ENCODE measurements at regions of chr3 and their contacts with region 1.

Region 1: DNA sequence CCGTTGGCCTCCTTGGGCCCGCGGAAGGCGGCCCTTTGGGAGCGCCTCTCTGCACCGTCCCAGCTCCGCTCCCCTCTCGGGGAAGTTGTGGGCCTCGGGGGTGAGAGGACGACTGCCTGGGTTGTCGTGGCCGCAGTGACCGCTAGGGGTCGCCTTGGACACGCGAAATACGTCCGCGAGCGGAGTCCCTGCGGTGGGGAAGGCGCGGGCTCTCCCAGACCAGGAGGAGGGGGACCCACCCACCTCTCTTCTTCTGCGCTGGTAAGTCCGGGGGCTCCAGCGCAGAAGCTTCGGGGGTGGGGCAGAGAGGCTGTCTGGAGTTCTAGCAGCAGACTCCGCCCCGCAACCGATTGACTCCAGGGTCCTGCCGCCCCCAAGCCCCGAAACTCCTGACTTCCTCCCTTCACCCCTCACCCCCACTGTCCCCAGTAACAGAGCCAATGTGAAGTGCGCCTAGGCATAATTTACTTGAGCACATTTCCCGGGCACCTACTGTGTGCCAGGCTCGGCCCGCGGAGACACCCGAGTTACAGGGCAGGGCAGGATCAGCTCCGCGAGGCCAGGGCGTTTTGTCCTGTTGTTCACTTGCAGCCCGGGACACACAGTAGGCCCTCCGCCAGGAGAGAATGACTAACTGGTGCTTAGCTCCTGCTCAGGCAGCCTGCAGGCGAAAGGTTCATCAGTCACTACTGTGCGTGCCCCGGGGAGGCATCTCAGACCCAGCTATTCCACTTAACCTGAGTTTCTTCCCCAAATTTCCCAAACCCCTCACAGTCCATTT is 32.8 kb downstream of the DNASE1L3 start:
- DNase-seq: peak; percentile 80 to 95 (median 88)
- ATAC-seq: peak; percentile 89
- H3K4me3 ChIP-seq: peak overlapping the region; percentile 60
- H3K4me3 Mint-ChIP-seq: peak overlapping the region; percentile 62
- H3K27ac ChIP-seq: no peak overlapping the region
- H3K27ac Mint-ChIP-seq: no peak overlapping the region
- H3K4me1 ChIP-seq: peaks cover 19% of the 10 kb centered on the region
- H3K4me1 Mint-ChIP-seq: peaks cover 13% of the 10 kb centered on the region
- H3K27me3 ChIP-seq: peaks cover 0 to 5% of the 10 kb centered on the region in 2 experiments
- H3K27me3 Mint-ChIP-seq: no peaks in the 10 kb centered on the region
- CTCF ChIP-seq: peak; percentile 96

Region 2: DNA sequence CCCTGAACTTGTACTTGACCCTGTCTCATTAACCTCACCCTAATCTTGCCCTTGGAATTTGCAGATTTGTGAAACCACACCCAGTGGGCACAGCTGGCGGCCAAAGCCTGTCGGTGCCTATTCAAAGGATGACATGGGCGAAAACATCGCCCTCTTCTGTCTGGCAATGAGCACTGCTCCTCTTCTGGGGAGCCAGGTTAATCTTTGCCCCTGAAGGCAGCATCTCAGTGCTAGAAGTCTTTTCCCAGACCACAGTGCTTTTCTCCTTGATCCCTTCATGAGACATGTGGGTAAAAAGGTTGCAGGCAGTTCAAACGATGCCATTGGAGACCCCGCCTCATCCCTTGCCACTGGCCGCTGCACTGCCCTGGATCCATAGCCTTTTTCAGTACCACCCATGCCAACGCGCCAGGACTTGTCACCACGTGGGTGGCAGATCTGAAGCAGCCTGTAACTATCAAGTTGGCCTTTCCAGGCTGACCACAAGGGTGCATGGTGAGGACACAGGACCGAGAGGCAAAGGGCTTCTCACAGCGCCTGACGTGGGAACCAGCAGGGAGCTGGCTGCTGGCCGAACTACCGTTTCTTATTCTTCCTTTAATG is 39.4 kb after region 1 on chr3:
- CTCF ChIA-PET with region 1: interaction called, 8 read pairs
- POLR2A ChIA-PET with region 1: no interaction called
- intact Hi-C with region 1: loop called in 1 of 2 experiments (anchors 2 kb)
- DNase-seq: peak; percentile 21 to 80 (median 43)
- ATAC-seq: peak; percentile 93
- H3K4me3 ChIP-seq: no peak overlapping the region
- H3K4me3 Mint-ChIP-seq: no peak overlapping the region
- H3K27ac ChIP-seq: no peak overlapping the region
- H3K27ac Mint-ChIP-seq: no peak overlapping the region
- H3K4me1 ChIP-seq: peaks cover 6% of the 10 kb centered on the region
- H3K4me1 Mint-ChIP-seq: peaks cover 6% of the 10 kb centered on the region
- H3K27me3 ChIP-seq: no peaks in the 10 kb centered on the region
- H3K27me3 Mint-ChIP-seq: no peaks in the 10 kb centered on the region
- CTCF ChIP-seq: peak; percentile 76

Region 3: GRCh38 chr3:58299839-58300516 is 122.0 kb after region 1 on chr3:
- CTCF ChIA-PET with region 1: no interaction called
- POLR2A ChIA-PET with region 1: no interaction called
- intact Hi-C with region 1: loop called in 1 of 2 experiments (anchors 5 kb)
- DNase-seq: peak in 2 of 14 experiments; percentile 23 to 36
- ATAC-seq: no peak
- H3K4me3 ChIP-seq: no peak overlapping the region
- H3K4me3 Mint-ChIP-seq: no peak overlapping the region
- H3K27ac ChIP-seq: no peak overlapping the region
- H3K27ac Mint-ChIP-seq: no peak overlapping the region
- H3K4me1 ChIP-seq: no peaks in the 10 kb centered on the region
- H3K4me1 Mint-ChIP-seq: no peaks in the 10 kb centered on the region
- H3K27me3 ChIP-seq: peaks cover 26 to 29% of the 10 kb centered on the region in 2 experiments
- H3K27me3 Mint-ChIP-seq: peaks cover 35% of the 10 kb centered on the region
- CTCF ChIP-seq: no peak

Region 4: DNA sequence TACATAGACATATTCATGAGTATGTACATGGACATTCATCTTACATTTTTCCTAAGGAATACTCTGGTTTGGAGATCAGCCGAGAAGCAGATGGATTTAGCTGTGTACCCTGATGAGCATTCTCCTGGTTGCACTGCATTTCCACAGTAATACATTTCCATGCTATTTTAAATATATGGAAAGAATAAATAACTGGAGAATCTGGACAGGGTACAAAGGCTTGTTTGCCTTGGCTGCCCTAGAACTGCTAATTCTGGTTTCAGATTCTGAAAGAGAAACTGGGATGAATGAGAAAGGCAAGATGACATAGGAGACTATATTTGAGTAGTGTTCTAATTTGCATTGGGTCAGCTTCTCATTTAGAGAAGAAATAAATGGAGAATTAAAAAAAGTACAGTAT is 679.5 kb after region 1 on chr3:
- CTCF ChIA-PET with region 1: no interaction called
- POLR2A ChIA-PET with region 1: no interaction called
- intact Hi-C with region 1: no loop called
- DNase-seq: no peak
- ATAC-seq: no peak
- H3K4me3 ChIP-seq: no peak overlapping the region
- H3K4me3 Mint-ChIP-seq: no peak overlapping the region
- H3K27ac ChIP-seq: no peak overlapping the region
- H3K27ac Mint-ChIP-seq: no peak overlapping the region
- H3K4me1 ChIP-seq: no peaks in the 10 kb centered on the region
- H3K4me1 Mint-ChIP-seq: no peaks in the 10 kb centered on the region
- H3K27me3 ChIP-seq: no peaks in the 10 kb centered on the region
- H3K27me3 Mint-ChIP-seq: peaks cover 4% of the 10 kb centered on the region
- CTCF ChIP-seq: no peak

Region 5: GRCh38 chr3:59185586-59186369 is 1007.8 kb after region 1 on chr3:
- CTCF ChIA-PET with region 1: no interaction called
- POLR2A ChIA-PET with region 1: no interaction called
- intact Hi-C with region 1: no loop called
- DNase-seq: no peak
- ATAC-seq: no peak
- H3K4me3 ChIP-seq: no peak overlapping the region
- H3K4me3 Mint-ChIP-seq: no peak overlapping the region
- H3K27ac ChIP-seq: no peak overlapping the region
- H3K27ac Mint-ChIP-seq: no peak overlapping the region
- H3K4me1 ChIP-seq: no peaks in the 10 kb centered on the region
- H3K4me1 Mint-ChIP-seq: no peaks in the 10 kb centered on the region
- H3K27me3 ChIP-seq: peaks cover 0 to 2% of the 10 kb centered on the region in 2 experiments
- H3K27me3 Mint-ChIP-seq: peaks cover 8% of the 10 kb centered on the region
- CTCF ChIP-seq: no peak